ENCODE measurements at regions of chr16 and their contacts with region 1.

Region 1: DNA sequence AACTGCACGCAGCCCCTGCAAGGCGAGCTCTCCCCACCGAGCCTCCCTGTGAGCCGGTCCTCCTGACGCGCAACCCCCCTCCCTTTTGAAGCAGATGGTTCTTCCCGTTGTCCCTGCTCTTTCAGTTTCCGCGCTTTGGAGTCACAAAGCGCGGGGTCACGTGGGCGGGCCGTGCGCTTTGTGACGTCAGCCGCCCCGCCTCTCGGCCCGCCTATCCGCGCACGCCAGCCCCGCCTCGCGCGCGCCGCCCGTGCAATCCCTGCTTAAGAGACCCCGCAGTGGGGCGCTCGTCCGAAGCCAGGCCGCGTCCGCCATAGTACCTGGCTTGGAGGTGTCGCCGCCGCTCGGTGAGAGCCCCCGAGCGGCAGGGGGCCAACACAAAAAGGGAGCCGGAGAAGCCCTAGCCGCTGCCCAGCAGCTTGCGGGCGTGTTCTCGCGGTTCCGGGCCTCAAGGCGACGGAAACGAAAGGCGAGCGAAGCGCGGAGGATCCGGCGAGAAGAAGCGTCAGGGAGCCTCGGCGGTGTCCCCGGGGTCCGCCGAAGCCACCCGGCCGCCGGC is at the start of gene RBBP6:
- DNase-seq: peak; percentile 96
- ATAC-seq: peak; percentile 92
- H3K4me3 ChIP-seq: peak within 1 kb of the TSS; percentile 86
- H3K27ac ChIP-seq: peak within 1 kb of the TSS; percentile 94
- H3K4me1 ChIP-seq: peaks cover 3% of the 10 kb centered on the region; the same call in 1 of the 2 replicates
- H3K27me3 ChIP-seq: no peaks in the 10 kb centered on the region
- CTCF ChIP-seq: peak; percentile 50
- POLR2A ChIP-seq: peak; percentile 99
- RAD21 ChIP-seq: 0 out of 2 replicates have a peak, but pooled peaks have one; percentile 4
- total RNA-seq, gene RBBP6: 7.2 and 13.6 TPM in 2 replicates

Region 2: GRCh38 chr16:25235991-25236390 is 696.6 kb after region 1 on chr16:
- CTCF ChIA-PET with region 1: no interaction called
- POLR2A ChIA-PET with region 1: no interaction called
- dilution Hi-C with region 1: no loop called
- in situ Hi-C with region 1: loop called (anchors 25 kb)
- intact Hi-C with region 1: no loop called
- DNase-seq: peak; percentile 27
- ATAC-seq: peak; percentile 47
- H3K4me3 ChIP-seq: no peak overlapping the region
- H3K27ac ChIP-seq: no peak overlapping the region
- H3K4me1 ChIP-seq: no peaks in the 10 kb centered on the region
- H3K27me3 ChIP-seq: peaks cover 3% of the 10 kb centered on the region
- CTCF ChIP-seq: no peak
- POLR2A ChIP-seq: no peak
- RAD21 ChIP-seq: no peak

Region 3: DNA sequence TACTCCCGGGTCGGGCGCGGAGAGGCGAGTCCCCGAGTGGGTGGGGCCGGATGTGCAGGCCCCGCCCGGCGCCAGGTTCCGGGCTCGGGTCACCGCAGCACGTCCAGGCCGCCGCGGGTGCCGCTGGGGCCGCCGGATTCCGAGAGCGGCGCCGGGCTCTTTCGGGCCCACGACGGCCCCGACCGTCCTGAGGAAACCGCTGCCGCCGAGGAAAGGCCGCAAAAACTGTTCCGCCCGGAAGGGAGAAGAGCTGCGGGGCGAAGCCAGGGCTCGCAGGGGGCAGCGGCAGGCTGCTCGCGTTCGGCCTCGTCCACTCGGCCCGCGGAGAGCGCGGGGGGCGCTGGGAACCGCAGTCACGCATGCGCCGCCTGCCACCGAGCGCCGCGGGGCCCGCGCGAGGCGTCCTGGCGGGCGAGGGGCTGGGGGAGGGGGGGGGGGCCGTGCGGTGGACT is 718.2 kb after region 1 on chr16 and contains the start of gene ZKSCAN2:
- CTCF ChIA-PET with region 1: no interaction called
- POLR2A ChIA-PET with region 1: no interaction called
- dilution Hi-C with region 1: no loop called
- in situ Hi-C with region 1: no loop called
- intact Hi-C with region 1: loop called (anchors 10 kb)
- DNase-seq: peak; percentile 86
- ATAC-seq: peak; percentile 93
- H3K4me3 ChIP-seq: peak within 1 kb of the TSS; percentile 57
- H3K27ac ChIP-seq: peak within 1 kb of the TSS; percentile 89
- H3K4me1 ChIP-seq: peaks cover 4% of the 10 kb centered on the region; the same call in 1 of the 2 replicates
- H3K27me3 ChIP-seq: no peaks in the 10 kb centered on the region
- CTCF ChIP-seq: no peak
- POLR2A ChIP-seq: peak; percentile 93
- RAD21 ChIP-seq: no peak
- total RNA-seq, gene ZKSCAN2: 3.8 and 4.7 TPM in 2 replicates

Measured in IMR-90 (cell line).